ENCODE measurements at regions of chr1 and their contacts with region 1.

Region 1: GRCh38 chr1:20521960-20522861 is 14.3 kb upstream of the MUL1 start:
- DNase-seq: peak; percentile 44 to 65 (median 59)
- H3K4me3 ChIP-seq: no peak overlapping the region
- H3K4me3 Mint-ChIP-seq: no peak overlapping the region
- H3K27ac ChIP-seq: no peak overlapping the region
- H3K27ac Mint-ChIP-seq: no peak overlapping the region
- H3K4me1 ChIP-seq: no peaks in the 10 kb centered on the region
- H3K4me1 Mint-ChIP-seq: peaks cover 6% of the 10 kb centered on the region
- H3K27me3 ChIP-seq: peaks cover 0 to 2% of the 10 kb centered on the region in 2 donors
- H3K27me3 Mint-ChIP-seq: peaks cover 10 to 32% (median 17%) of the 10 kb centered on the region in 3 donors
- CTCF ChIP-seq: peak; percentile 86

Region 2: GRCh38 chr1:20124456-20125057 is 397.7 kb before region 1 on chr1:
- intact Hi-C with region 1: no loop called
- DNase-seq: peak; percentile 11 to 47 (median 19)
- H3K4me3 ChIP-seq: no peak overlapping the region
- H3K4me3 Mint-ChIP-seq: no peak overlapping the region
- H3K27ac ChIP-seq: no peak overlapping the region
- H3K27ac Mint-ChIP-seq: peak overlapping the region in 2 of 7 donors; percentile 32 to 45
- H3K4me1 ChIP-seq: peaks cover 18 to 31% of the 10 kb centered on the region in 2 donors
- H3K4me1 Mint-ChIP-seq: peaks cover 34% of the 10 kb centered on the region
- H3K27me3 ChIP-seq: peaks cover 0 to 2% of the 10 kb centered on the region in 2 donors
- H3K27me3 Mint-ChIP-seq: peaks cover 2 to 13% (median 10%) of the 10 kb centered on the region in 3 donors
- CTCF ChIP-seq: no peak

Region 3: GRCh38 chr1:20290624-20291597 is 231.3 kb before region 1 on chr1 and contains the start of gene VWA5B1:
- intact Hi-C with region 1: no loop called
- DNase-seq: no peak
- H3K4me3 ChIP-seq: no peak within 1 kb of the TSS
- H3K4me3 Mint-ChIP-seq: peak within 1 kb of the TSS in 1 of 2 donors; percentile 66
- H3K27ac ChIP-seq: no peak within 1 kb of the TSS
- H3K27ac Mint-ChIP-seq: no peak within 1 kb of the TSS
- H3K4me1 ChIP-seq: no peaks in the 10 kb centered on the region
- H3K4me1 Mint-ChIP-seq: no peaks in the 10 kb centered on the region
- H3K27me3 ChIP-seq: peaks cover 0 to 31% of the 10 kb centered on the region in 2 donors
- H3K27me3 Mint-ChIP-seq: peaks cover 34 to 41% (median 36%) of the 10 kb centered on the region in 3 donors
- CTCF ChIP-seq: no peak
- polyA plus RNA-seq, gene VWA5B1: not detected

Region 4: DNA sequence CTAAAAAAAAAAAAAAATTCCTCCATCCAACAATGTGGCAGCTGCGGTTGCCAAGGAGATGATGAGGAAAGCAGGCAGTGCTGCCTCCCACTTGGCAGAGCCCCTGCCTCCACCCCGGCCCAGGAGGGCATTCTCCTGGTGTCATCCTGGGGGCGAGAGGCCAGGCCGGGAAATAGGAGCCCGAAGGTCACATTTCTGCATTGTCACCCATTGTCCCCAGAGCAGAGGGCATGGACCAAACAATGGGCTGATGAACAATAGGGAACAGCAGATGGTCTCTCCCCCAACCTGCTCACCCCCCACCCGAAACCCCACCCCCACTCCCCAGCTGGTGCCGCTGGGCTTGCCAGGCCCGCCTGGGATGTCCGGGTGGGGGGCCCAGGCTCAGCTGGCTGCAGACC is 73.5 kb before region 1 on chr1:
- intact Hi-C with region 1: no loop called
- DNase-seq: no peak
- H3K4me3 ChIP-seq: no peak overlapping the region
- H3K4me3 Mint-ChIP-seq: no peak overlapping the region
- H3K27ac ChIP-seq: no peak overlapping the region
- H3K27ac Mint-ChIP-seq: no peak overlapping the region
- H3K4me1 ChIP-seq: no peaks in the 10 kb centered on the region
- H3K4me1 Mint-ChIP-seq: no peaks in the 10 kb centered on the region
- H3K27me3 ChIP-seq: no peaks in the 10 kb centered on the region
- H3K27me3 Mint-ChIP-seq: peaks cover 6 to 14% (median 9%) of the 10 kb centered on the region in 3 donors
- CTCF ChIP-seq: no peak

Region 5: DNA sequence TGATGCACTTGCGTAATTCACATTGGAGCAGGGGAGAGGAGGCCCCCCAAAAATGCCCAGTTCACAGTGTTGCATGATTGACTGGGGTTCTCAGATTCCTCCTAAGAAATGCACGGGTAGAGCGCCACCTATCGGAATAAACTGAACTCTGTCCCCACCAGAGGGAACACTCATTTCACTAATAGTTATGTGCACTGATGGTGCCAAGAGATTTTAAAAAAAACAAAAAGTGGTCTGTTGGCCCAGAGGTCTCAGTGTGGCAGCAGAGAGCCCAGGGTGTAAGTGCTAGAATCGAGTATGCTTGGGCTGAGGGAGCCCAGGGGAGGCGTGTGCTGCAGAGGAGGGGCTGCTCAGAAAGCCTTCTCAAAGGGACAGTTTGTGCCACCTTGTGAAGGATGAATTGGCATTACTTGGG is 118.0 kb after region 1 on chr1:
- intact Hi-C with region 1: loop called (anchors 1 to 2 kb)
- DNase-seq: peak; percentile 47 to 64 (median 62)
- H3K4me3 ChIP-seq: no peak overlapping the region
- H3K4me3 Mint-ChIP-seq: no peak overlapping the region
- H3K27ac ChIP-seq: no peak overlapping the region
- H3K27ac Mint-ChIP-seq: peak overlapping the region in 1 of 7 donors; percentile 85
- H3K4me1 ChIP-seq: no peaks in the 10 kb centered on the region
- H3K4me1 Mint-ChIP-seq: peaks cover 5% of the 10 kb centered on the region
- H3K27me3 ChIP-seq: no peaks in the 10 kb centered on the region
- H3K27me3 Mint-ChIP-seq: peaks cover 0 to 3% (median 1%) of the 10 kb centered on the region in 3 donors
- CTCF ChIP-seq: peak; percentile 86

Measured in CD14-positive monocyte (primary cell).